AG04450 (cell line): ENCODE measurements at regions of chr17 and their contacts with region 1.

Region 1: GRCh38 chr17:28763804-28764266 is 20.0 kb downstream of the TRAF4 start:
- DNase-seq: peak; percentile 51
- H3K4me3 ChIP-seq: no peak overlapping the region
- H3K27ac ChIP-seq: no peak overlapping the region
- H3K27me3 ChIP-seq: no peaks in the 10 kb centered on the region
- CTCF ChIP-seq: peak; percentile 89

Region 2: DNA sequence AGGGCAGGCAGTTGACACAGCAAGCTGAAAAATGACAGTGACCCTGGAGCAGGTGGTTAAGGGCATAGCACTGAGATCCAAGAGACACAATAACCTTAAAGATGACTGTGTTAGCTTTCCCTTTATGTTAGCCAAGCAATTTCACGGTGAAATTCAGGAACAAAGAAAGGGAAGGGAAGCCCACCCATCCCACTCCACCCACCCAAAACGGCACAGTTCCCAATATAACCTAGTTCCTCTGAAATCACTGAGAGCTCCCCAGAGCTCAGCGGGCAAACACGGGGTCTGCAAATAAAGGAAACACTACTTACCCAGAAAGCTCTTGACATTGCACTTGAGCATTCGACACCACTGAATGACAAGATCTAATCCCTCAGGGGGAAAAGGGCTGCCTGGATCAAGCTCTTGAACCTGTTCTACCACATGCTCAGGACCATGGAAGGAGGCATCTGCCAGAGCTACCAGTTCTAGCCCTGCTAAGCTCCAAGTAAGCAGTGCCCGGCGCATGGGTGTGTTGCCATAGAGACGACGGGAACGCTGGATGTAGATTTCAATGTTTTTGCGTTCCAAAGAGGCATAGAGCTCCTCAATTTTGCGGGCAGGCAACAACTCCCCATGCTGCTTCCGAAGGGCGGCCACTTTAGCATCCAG is 129.5 kb before region 1 on chr17:
- CTCF ChIA-PET with region 1: no interaction called
- POLR2A ChIA-PET with region 1: no interaction called
- DNase-seq: no peak
- H3K4me3 ChIP-seq: no peak overlapping the region
- H3K27ac ChIP-seq: no peak overlapping the region
- H3K27me3 ChIP-seq: no peaks in the 10 kb centered on the region
- CTCF ChIP-seq: no peak

Region 3: DNA sequence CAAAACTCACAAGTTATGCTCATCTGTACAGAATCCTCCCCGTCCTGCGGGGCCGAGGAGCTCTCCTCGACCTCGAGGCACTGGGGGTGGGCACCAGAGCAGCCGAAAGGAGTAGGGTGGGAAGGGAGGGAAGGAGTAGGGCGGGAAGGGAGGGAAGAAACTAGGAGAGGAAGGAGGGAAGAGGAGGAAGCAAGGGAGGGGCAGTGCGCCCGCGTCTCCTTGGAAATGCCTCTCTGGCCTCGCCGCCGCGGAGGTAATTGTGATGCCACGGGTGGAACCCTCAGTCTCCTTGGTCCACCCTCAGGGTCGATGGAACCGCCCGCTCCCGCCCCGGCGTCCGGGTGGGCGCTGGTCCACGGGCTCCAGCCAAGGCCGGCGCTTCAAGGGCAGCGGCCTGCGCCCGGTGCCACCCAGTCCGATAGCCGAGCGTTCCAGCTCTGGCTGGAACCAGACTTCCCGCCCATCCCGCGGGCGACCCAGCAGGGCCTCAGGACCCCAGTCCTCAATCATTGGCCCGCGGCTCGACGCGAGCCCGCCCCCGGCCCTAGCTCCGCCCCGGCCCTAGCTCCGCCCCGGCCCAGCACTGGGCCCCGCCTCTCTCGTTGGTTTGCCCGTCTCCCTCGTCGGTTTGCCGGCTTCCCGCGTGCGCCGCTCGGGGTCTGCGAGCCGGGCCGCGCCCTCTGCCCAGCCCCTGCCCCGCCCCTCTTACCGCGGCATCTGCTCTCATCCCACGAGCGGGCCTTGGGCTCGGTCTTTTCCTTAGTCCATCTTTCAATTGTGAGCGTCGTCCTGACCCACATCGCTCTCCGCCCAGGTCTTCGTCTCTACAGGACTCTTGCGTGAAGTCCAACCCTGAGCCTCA is 52.7 kb before region 1 on chr17:
- CTCF ChIA-PET with region 1: interaction called, 9 read pairs
- POLR2A ChIA-PET with region 1: interaction called, 11 read pairs
- DNase-seq: peak; percentile 68
- H3K4me3 ChIP-seq: peak overlapping the region; percentile 64
- H3K27ac ChIP-seq: peak overlapping the region; percentile 78
- H3K27me3 ChIP-seq: no peaks in the 10 kb centered on the region
- CTCF ChIP-seq: no peak

Region 4: GRCh38 chr17:28777178-28777577 is 13.3 kb after region 1 on chr17:
- CTCF ChIA-PET with region 1: interaction called, 90 read pairs
- POLR2A ChIA-PET with region 1: no interaction called
- DNase-seq: no peak
- H3K4me3 ChIP-seq: no peak overlapping the region
- H3K27ac ChIP-seq: no peak overlapping the region
- H3K27me3 ChIP-seq: no peaks in the 10 kb centered on the region
- CTCF ChIP-seq: no peak

Region 5: GRCh38 chr17:28818819-28819221 is 55.0 kb after region 1 on chr17:
- CTCF ChIA-PET with region 1: interaction called, 13 read pairs
- POLR2A ChIA-PET with region 1: no interaction called
- DNase-seq: no peak
- H3K4me3 ChIP-seq: no peak overlapping the region
- H3K27ac ChIP-seq: no peak overlapping the region
- H3K27me3 ChIP-seq: no peaks in the 10 kb centered on the region
- CTCF ChIP-seq: no peak

Region 6: GRCh38 chr17:28878981-28879380 is 115.1 kb after region 1 on chr17:
- CTCF ChIA-PET with region 1: interaction called, 23 read pairs
- POLR2A ChIA-PET with region 1: interaction called, 3 read pairs
- DNase-seq: no peak
- H3K4me3 ChIP-seq: no peak overlapping the region
- H3K27ac ChIP-seq: no peak overlapping the region
- H3K27me3 ChIP-seq: no peaks in the 10 kb centered on the region
- CTCF ChIP-seq: peak; percentile 54

Region 7: DNA sequence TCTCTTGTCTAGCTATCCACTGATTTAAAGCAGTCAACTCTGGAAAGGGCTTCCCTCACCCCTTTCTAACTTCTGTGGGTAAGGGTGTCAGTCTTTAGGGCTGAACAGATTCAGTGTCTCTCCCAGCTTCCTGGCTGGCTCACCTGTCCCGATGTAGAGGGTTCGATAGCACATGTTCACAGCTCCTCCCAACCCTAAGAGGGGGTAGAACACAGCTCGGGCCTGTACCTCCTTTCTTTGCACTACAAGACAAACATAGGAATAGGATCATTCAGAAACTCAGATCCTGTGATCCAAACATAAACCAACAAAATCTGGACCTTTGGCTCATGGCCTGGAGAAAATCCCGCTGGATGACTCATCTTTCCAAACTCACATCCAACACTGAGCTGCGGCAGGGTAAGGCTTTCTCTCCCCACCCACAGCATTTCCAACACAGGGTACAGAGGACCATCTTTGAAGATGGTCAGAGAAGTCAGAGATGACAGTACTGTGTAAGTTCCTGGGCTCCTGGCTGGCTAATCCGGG is 144.9 kb after region 1 on chr17:
- CTCF ChIA-PET with region 1: interaction called, 33 read pairs
- POLR2A ChIA-PET with region 1: no interaction called
- DNase-seq: peak; percentile 68
- H3K4me3 ChIP-seq: no peak overlapping the region
- H3K27ac ChIP-seq: peak overlapping the region; percentile 84
- H3K27me3 ChIP-seq: no peaks in the 10 kb centered on the region
- CTCF ChIP-seq: no peak

Region 8: GRCh38 chr17:28946239-28946638 is 182.4 kb after region 1 on chr17:
- CTCF ChIA-PET with region 1: interaction called, 12 read pairs
- POLR2A ChIA-PET with region 1: interaction called, 6 read pairs
- DNase-seq: no peak
- H3K4me3 ChIP-seq: no peak overlapping the region
- H3K27ac ChIP-seq: no peak overlapping the region
- H3K27me3 ChIP-seq: no peaks in the 10 kb centered on the region
- CTCF ChIP-seq: no peak